ENCODE measurements at regions of chr1 and their contacts with region 1.

Region 1: DNA sequence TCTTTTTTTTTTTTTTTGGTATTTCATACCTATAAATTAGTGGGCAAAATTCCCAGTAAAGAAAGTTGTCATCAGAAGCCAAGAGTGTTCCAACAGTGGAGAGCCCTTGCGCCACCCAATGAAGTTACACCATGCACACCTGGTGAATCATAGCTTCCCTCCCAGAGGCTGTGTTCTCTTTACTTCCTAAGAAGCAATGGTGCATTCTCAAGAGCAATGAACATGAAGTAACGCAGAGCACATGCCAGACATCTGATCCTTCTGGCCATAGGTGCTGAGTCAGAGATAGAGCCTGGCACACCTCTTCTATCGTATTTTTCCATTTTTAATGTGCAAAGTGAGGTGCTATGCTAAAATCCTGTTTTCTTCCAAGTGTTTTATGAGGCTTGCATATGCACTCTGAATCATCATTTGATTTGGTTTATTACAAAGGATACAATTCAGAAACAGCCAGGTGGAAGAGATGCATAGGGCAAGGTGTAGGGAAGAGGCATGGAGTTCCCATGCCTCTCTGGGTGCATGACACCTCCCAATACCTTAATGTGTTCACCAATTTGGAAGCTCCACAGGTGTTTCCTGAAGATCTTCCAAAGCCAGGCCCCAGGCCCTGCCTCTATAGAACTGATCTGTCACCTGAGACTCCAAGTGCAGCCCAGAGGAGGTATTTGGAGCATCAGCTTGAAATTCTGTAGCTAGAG is 408.0 kb downstream of the SIPA1L2 start:
- DNase-seq: peak in 1 of 2 experiments; percentile 88
- H3K4me3 ChIP-seq: no peak overlapping the region
- H3K27ac ChIP-seq: peak overlapping the region; percentile 53
- H3K4me1 ChIP-seq: peaks cover 11% of the 10 kb centered on the region; the same call in 1 of the 2 replicates
- H3K27me3 ChIP-seq: no peaks in the 10 kb centered on the region
- CTCF ChIP-seq: no peak

Region 2: DNA sequence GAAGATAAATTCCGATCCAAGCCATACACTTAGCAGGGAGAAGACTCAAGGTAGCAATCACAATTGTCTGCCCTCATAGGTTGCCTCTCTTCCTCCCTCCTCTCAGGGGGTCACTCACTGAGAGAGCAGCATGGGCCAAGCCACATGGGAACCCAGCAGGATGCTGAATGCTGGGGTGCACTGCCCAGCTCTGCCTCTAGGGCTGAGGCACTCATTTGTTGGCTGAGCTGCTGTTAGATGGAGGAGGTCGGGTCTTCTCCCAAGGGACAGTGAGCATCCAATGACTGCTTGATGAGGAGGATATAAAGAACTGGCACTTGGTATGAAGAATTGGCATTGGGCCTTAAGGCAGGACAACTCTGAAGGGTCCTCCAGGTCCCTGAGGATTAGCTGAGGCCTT is 10.8 kb before region 1 on chr1:
- CTCF ChIA-PET with region 1: interaction called, 11 read pairs
- POLR2A ChIA-PET with region 1: no interaction called
- intact Hi-C with region 1: no loop called
- DNase-seq: no peak
- H3K4me3 ChIP-seq: no peak overlapping the region
- H3K27ac ChIP-seq: no peak overlapping the region
- H3K4me1 ChIP-seq: no peaks in the 10 kb centered on the region
- H3K27me3 ChIP-seq: no peaks in the 10 kb centered on the region; the same call in 1 of the 2 replicates
- CTCF ChIP-seq: peak; percentile 52; the same call in 1 of the 2 replicates

Measured in PC-9 (cell line).